AG04450 (cell line): ENCODE measurements at regions of chr14 and their contacts with region 1.

Region 1: DNA sequence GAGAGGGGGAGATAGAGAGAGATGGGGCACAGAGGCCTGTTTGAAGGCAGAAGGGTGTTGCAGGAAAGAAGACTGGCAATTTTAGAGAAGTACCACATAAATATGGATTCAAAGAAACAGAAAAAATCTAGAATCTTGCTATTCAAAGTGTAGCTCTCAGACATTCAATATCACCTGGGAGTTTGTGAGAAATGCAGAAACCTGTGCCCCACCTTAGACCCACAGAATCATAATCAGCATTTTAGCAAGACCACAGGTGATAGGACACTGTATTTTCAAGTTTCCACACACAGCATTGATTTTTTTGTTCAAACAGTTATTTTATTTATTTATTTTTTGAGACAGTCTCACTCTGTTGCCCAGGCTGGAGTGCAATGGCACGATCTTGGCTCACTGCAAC is 3.3 kb downstream of the NEDD8 start:
- DNase-seq: no peak
- H3K4me3 ChIP-seq: no peak overlapping the region
- H3K27ac ChIP-seq: no peak overlapping the region
- H3K27me3 ChIP-seq: no peaks in the 10 kb centered on the region
- CTCF ChIP-seq: no peak

Region 2: DNA sequence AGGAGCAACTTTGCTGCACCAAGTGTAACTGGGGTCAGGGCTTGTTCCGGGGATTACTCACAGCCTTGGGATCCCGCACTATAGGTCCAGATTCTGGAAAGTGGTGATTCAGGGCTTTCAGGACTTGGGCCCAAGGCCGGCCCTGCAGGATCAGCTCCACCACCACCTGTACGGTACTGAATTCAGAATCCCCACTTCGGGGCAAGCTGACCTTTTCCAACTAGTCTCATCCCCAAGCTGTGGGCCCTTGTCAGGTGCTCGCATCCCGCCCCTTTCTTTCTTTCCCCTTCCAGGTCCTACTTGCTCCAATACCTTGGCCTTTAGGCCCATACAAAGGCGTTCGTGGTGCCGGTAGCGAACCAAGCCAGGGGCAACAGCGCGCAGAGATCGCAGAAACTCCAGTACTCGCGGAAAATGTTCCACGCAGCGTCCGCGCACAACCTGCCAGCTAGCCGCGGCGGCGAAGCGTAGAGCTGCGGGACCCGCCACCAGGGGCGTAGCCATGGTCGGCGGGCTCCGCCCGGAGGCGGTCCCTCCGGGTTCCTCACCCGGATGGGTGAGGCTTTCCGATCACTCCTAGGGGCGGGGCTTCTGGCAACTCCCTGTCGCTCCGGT is 13.0 kb after region 1 on chr14:
- CTCF ChIA-PET with region 1: interaction called, 11 read pairs
- POLR2A ChIA-PET with region 1: interaction called, 8 read pairs
- DNase-seq: peak; percentile 72
- H3K4me3 ChIP-seq: peak overlapping the region; percentile 92
- H3K27ac ChIP-seq: peak overlapping the region; percentile 99
- H3K27me3 ChIP-seq: no peaks in the 10 kb centered on the region
- CTCF ChIP-seq: peak; percentile 55